Mucosa of descending colon (tissue), 3 donors: ENCODE measurements at regions of chr15 and their contacts with region 1.

Region 1: DNA sequence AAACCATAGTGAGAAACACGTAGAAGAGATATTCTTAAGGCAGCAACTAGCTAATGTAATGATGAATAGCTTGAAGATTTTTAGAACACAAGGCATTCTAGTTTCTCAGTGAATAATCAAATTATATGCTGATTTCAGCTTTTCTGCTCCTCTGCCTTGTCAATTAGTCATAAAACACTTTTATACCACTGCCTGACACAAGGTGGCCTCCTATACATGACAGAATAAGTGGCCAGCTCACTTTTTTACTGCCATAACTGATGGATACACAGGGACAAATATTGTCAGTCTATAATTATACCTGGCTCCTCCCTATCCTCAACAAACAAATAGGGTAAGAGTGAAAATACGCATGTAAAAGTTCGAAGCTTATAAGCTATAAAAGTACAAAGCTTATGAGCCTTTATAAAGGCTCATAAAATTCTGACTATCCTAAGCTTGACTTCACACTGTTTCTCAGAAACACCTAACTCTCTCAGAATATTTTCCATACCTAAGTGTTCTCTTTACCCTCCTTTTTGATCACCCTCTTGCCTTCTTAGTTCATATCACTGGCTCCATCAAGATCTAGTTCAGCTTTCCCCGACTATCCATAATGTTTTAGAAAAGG is 81.6 kb downstream of the HERC1 start:
- DNase-seq: peak in 1 of 3 donors; percentile 86
- ATAC-seq: peak; percentile 100
- H3K4me3 ChIP-seq: no peak overlapping the region
- H3K4me1 ChIP-seq: peaks cover 13% of the 10 kb centered on the region
- CTCF ChIP-seq: peak; percentile 41

Region 2: DNA sequence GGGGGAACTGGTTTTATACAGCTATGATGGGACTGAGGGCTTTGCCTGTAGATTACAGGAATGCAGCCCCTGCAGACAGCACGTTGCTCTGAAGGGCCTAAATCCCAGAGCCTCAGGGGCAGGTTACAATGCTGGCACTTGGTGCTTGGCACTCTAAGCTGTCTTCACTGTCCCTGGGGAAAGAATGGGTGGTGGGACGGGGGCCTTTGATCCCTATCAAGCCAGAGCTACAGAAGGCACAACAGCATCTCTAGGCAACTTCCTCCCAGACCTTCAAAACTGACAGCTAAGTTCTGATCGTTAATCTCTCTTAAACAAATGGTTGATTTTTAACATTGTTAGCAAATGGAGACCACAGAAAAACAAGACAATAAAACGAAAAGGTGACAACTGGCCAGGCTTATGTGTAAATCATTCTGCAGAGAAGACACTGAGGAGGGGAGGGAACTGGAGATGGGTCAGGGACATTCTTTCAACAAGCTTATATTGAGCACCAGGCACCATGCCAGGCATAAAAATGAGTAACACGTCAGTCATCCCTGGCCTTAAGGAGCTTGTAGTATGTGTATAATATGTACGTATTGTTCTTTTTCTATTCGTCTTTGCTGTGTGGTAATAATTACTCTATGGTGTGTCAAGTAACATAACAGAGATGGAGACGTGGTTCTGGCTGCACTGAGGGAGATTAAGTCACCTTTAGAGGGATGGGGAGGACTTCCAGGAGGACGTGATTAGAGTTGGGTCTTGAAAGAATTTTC is 419.6 kb before region 1 on chr15:
- intact Hi-C with region 1: no loop called
- DNase-seq: no peak
- ATAC-seq: no peak
- H3K4me3 ChIP-seq: no peak overlapping the region
- H3K4me1 ChIP-seq: no peaks in the 10 kb centered on the region
- CTCF ChIP-seq: no peak

Region 3: DNA sequence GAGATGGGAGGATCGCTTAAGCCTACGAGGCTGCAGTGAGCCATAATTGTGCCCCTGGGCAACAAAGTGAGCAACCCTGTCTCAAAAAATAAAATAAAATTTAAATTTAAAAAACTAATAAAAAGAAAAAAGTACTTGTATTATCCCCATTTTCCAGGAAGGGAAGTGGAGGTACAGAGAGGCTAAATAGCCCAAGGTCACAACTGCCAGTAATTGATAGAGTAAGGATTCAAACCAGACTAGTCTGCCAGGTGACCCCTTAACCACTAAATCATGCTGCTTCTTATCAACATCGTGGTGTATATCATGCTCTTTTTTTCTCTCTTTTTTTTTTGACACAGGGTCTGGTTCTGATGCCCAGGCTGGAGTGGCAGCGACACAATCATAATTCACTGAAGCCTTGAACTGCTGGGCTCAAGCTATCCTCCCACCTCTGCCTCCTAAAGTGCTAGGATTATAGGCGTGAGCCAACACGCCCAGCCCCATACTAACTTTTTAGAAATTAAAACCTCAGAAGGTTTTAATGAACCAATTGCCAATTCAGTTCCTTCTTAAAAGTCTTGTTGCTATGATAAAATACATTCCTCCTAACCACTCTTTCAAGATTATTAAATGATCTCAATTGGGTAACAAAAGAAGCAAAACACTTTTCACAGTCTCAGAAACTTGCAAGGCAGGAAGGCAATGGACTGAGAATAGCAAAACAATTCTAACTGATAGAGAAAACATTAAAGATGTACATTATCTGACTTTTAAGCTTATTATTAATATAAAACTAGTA is 51.1 kb after region 1 on chr15:
- intact Hi-C with region 1: no loop called
- DNase-seq: no peak
- ATAC-seq: no peak
- H3K4me3 ChIP-seq: no peak overlapping the region
- H3K4me1 ChIP-seq: peaks cover 9% of the 10 kb centered on the region
- CTCF ChIP-seq: no peak

Region 4: DNA sequence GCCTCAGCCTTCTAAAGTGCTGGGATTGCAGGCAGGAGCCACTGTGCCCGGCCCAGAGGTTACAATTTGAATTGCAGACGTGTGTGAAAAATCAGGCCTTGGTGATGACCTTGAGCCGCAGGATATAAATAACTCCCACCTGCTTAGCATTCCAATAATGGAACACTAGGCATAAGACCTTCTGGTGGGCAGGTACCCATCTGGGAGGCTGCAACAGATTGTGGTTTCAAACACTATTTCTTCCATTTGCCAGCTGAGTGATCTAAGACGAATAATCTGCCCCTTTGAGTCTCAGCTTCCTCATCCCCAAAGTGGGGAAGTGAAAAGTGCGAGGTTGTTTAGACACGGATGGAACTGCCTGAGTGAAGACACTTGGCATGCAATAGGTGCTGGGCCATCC is 129.3 kb after region 1 on chr15:
- intact Hi-C with region 1: loop called in 1 of 2 experiments (anchors 10 kb)
- DNase-seq: no peak
- ATAC-seq: peak; percentile 28
- H3K4me3 ChIP-seq: no peak overlapping the region
- H3K4me1 ChIP-seq: no peaks in the 10 kb centered on the region
- CTCF ChIP-seq: no peak

Region 5: GRCh38 chr15:63891079-63891767 is 139.0 kb after region 1 on chr15:
- intact Hi-C with region 1: loop called (anchors 10 kb)
- DNase-seq: peak; percentile 79 to 93 (median 88)
- ATAC-seq: peak; percentile 87
- H3K4me3 ChIP-seq: no peak overlapping the region
- H3K4me1 ChIP-seq: peaks cover 7% of the 10 kb centered on the region
- CTCF ChIP-seq: peak; percentile 51

Region 6: GRCh38 chr15:64046347-64047153 is 294.4 kb after region 1 on chr15 and contains the start of gene DAPK2:
- intact Hi-C with region 1: loop called in 1 of 2 experiments (anchors 10 kb)
- DNase-seq: peak; percentile 82 to 87 (median 83)
- ATAC-seq: peak; percentile 90
- H3K4me3 ChIP-seq: peak within 1 kb of the TSS; percentile 57
- H3K4me1 ChIP-seq: peaks cover 5% of the 10 kb centered on the region
- CTCF ChIP-seq: peak; percentile 85
- total RNA-seq, gene DAPK2: 32.0 to 82.0 (median 35.5) TPM

Region 7: GRCh38 chr15:64067564-64068030 is 315.4 kb after region 1 on chr15:
- intact Hi-C with region 1: loop called in 1 of 2 experiments (anchors 5 kb)
- DNase-seq: peak in 2 of 3 donors; percentile 35 to 84
- ATAC-seq: peak; percentile 84
- H3K4me3 ChIP-seq: no peak overlapping the region
- H3K4me1 ChIP-seq: peaks cover 6% of the 10 kb centered on the region
- CTCF ChIP-seq: peak; percentile 63